GM23248 (cell line): ENCODE measurements at regions of chr3 and their contacts with region 1.

Region 1: DNA sequence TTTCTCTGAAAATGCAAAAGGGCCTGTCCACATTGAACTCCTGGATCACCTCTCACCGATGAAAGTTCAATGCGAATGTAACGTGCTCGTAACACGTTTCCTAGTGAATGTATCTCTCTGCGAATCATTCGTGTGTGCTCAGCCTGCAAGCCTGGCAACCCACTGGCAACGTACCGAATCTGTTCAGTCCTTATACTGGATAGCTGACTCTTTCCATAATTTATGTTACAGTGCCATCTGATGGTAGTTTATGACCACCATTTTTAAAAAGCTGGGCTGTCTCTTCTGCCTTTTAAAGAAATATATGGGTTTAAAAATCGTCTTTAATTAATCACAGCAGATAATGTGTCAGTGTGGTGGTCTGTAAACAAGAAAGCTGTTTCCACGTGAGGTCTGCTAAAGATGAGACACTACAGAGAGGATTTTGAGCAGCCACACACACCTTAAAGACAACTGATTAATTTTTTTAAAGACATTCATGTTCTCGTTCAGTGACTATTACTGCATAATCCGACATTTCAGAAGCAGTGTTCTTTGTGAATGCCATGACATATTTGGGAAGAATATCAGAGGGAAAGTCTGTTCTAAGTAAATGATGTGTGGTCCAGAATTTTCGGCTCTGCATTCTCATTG is 69.4 kb upstream of the FOXP1 start:
- DNase-seq: peak; percentile 74
- H3K4me3 ChIP-seq: 0 out of 2 replicates have a peak overlapping the region, but pooled peaks have one; percentile 23
- H3K27ac ChIP-seq: no peak overlapping the region
- H3K4me1 ChIP-seq: 0 out of 2 replicates have a peak, but pooled peaks cover 3% of the 10 kb centered on the region
- H3K27me3 ChIP-seq: no peaks in the 10 kb centered on the region

Region 2: DNA sequence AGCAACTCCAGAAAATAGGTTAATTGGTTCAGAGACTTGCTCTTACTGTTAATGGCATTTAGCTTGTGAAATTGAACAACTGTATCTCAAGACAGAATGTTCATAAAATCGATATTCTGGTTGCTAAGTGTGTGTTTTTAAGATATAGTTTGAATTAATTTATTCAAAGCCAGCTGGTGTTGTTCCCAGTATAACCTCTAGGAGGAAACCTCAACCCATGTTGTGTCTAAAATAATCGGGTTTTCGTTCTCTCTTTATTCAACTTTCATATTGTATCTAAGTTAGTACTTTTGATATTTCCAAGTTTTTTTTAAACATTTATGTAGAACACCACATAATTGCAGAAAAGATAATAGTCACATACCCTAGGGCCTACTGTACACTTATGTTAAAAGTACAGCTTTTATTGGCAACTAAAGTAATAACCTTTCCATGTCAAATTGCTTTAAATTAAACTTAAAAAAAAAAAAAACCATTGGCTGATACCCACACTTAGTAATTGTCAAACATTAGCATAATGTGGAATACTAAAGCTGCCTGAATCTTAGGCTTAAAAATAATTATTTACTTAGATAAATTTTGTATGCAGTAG is 1562.5 kb before region 1 on chr3:
- in situ Hi-C with region 1: loop called (anchors 25 kb)
- DNase-seq: peak; percentile 51
- H3K4me3 ChIP-seq: no peak overlapping the region
- H3K27ac ChIP-seq: no peak overlapping the region
- H3K4me1 ChIP-seq: no peaks in the 10 kb centered on the region
- H3K27me3 ChIP-seq: no peaks in the 10 kb centered on the region; the same call in 1 of the 2 replicates

Region 3: GRCh38 chr3:70539908-70540307 is 1113.0 kb before region 1 on chr3:
- in situ Hi-C with region 1: loop called (anchors 10 kb)
- DNase-seq: no peak
- H3K4me3 ChIP-seq: no peak overlapping the region
- H3K27ac ChIP-seq: no peak overlapping the region
- H3K4me1 ChIP-seq: no peaks in the 10 kb centered on the region
- H3K27me3 ChIP-seq: peaks cover 5% of the 10 kb centered on the region; the same call in 1 of the 2 replicates